ENCODE measurements at regions of chr6 and their contacts with region 1.

Region 1: GRCh38 chr6:39980839-39981580 is 46.7 kb upstream of the MOCS1 start:
- DNase-seq: peak in 1 of 2 donors; percentile 34
- ATAC-seq: no peak
- H3K4me3 ChIP-seq: no peak overlapping the region
- H3K4me3 Mint-ChIP-seq: no peak overlapping the region
- H3K27ac ChIP-seq: no peak overlapping the region
- H3K27ac Mint-ChIP-seq: no peak overlapping the region
- H3K4me1 ChIP-seq: no peaks in the 10 kb centered on the region
- H3K4me1 Mint-ChIP-seq: no peaks in the 10 kb centered on the region
- H3K27me3 ChIP-seq: no peaks in the 10 kb centered on the region
- H3K27me3 Mint-ChIP-seq: peaks cover 20 to 75% of the 10 kb centered on the region in 2 donors
- CTCF ChIP-seq: no peak

Region 2: DNA sequence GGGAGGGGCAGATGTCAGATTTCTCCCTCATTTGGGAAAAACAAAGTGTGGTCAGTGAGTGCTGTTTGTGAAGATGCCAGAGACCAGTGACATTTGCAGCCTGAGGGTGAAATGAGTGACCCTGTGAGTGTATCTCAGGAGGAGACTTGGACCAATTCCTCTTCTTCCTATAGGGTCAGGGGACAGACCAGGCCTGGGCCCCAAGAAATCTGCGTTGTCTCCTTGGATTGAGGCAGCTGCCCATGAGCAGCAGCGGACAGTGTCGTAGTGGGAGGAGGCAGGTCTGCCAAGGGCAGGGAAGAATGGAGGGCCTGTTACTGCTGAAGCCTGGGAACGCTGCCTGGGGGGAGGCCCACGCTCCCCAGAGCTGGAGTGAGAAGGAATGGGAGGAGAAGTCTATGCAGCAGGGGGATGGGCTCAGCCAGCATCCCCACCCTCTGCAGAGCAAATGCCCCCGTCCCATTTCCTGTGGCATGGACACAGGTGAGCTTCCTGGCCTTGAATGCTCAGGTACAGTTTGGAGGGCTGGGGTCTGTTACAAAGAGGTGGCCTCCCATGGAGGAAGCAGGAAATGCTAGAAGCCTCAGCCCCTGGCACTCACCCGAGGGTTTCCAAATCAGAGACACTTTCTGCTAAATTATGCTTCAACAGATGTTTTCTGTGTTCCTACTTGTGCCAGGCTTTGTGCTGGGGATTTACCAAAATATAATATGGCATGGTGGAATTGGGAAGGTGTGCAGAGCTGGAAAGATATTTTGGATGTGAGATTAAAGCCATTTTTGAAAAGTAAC is 159.1 kb before region 1 on chr6:
- intact Hi-C with region 1: no loop called
- DNase-seq: no peak
- ATAC-seq: no peak
- H3K4me3 ChIP-seq: no peak overlapping the region
- H3K4me3 Mint-ChIP-seq: no peak overlapping the region
- H3K27ac ChIP-seq: no peak overlapping the region
- H3K27ac Mint-ChIP-seq: no peak overlapping the region
- H3K4me1 ChIP-seq: no peaks in the 10 kb centered on the region
- H3K4me1 Mint-ChIP-seq: no peaks in the 10 kb centered on the region
- H3K27me3 ChIP-seq: no peaks in the 10 kb centered on the region
- H3K27me3 Mint-ChIP-seq: peaks cover 0 to 6% of the 10 kb centered on the region in 2 donors
- CTCF ChIP-seq: no peak

Region 3: GRCh38 chr6:41039060-41039998 is 1058.3 kb after region 1 on chr6 and contains the start of gene UNC5CL:
- intact Hi-C with region 1: loop called (anchors 5 kb)
- DNase-seq: peak in 1 of 2 donors; percentile 71
- ATAC-seq: peak in 2 of 3 donors; percentile 67 to 75
- H3K4me3 ChIP-seq: no peak within 1 kb of the TSS
- H3K4me3 Mint-ChIP-seq: no peak within 1 kb of the TSS
- H3K27ac ChIP-seq: no peak within 1 kb of the TSS
- H3K27ac Mint-ChIP-seq: no peak within 1 kb of the TSS
- H3K4me1 ChIP-seq: no peaks in the 10 kb centered on the region
- H3K4me1 Mint-ChIP-seq: no peaks in the 10 kb centered on the region
- H3K27me3 ChIP-seq: no peaks in the 10 kb centered on the region
- H3K27me3 Mint-ChIP-seq: no peaks in the 10 kb centered on the region
- CTCF ChIP-seq: peak; percentile 71
- total RNA-seq, gene UNC5CL: 2.1 to 5.3 (median 4.4) TPM